Activated CD4-positive, alpha-beta memory T cell treated with anti-CD3 and anti-CD28 coated beads for 36 hours (primary cell): ENCODE measurements at regions of chr10 and their contacts with region 1.

Region 1: DNA sequence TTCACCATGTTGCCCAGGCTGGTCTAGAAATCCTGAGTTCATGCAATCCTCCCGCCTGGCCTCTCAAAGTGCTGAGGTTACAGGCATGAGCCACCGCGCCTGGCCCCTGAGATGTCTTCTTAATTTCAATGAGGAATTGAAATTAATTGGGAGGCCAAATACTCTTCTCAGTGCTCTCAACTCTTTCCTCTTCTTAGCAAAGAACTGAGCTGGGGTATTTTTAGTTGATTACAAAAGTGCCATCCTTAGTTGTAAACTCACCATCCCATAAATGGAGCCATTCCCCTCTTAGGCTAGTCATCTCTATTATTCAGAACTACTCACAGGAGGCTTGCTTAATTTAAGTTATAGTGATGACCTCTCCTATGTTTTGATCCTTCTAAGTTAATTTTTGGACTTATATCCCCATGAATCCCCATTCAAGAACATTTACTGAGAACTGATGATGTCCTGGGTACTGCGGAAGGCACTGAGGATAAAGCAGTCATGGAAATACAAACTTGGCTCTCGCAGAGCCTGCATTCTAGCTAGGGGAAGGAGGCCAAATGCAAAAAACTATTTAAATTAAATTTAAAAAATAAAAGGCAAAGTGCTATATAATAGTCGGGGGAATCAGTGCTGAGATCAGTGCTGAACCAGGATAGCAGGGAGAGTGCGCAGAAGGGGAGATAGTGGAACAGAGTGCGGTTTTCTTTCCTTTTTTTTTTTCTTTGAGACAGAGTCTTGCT is 145.3 kb downstream of the SFMBT2 start:
- DNase-seq: no peak
- H3K4me3 Mint-ChIP-seq: no peak overlapping the region
- H3K27ac Mint-ChIP-seq: no peak overlapping the region
- H3K4me1 Mint-ChIP-seq: peaks cover 42% of the 10 kb centered on the region
- H3K27me3 Mint-ChIP-seq: peaks cover 2% of the 10 kb centered on the region

Region 2: DNA sequence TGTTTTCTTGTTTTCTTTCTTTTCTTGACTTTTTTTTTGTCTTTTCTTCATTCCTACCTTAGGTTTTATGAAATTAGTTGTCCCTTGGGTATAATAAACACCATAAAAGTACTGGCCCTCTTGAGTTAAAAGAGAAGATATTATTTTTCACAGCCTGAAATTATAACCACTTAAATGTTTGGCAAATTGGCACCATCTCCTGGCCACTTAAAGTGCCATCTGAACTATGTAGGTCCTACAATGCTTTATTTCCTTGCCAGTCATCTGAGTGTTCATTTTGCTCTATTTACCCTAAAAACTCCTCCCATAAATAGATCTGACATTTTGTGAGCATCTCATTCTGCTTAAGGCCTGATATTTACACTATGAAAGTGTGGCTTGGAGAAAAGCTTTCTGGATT is 586.6 kb before region 1 on chr10:
- CTCF ChIA-PET with region 1: no interaction called
- POLR2A ChIA-PET with region 1: no interaction called
- intact Hi-C with region 1: no loop called
- DNase-seq: no peak
- H3K4me3 Mint-ChIP-seq: no peak overlapping the region
- H3K27ac Mint-ChIP-seq: no peak overlapping the region
- H3K4me1 Mint-ChIP-seq: peaks cover 4% of the 10 kb centered on the region
- H3K27me3 Mint-ChIP-seq: peaks cover 6% of the 10 kb centered on the region

Region 3: DNA sequence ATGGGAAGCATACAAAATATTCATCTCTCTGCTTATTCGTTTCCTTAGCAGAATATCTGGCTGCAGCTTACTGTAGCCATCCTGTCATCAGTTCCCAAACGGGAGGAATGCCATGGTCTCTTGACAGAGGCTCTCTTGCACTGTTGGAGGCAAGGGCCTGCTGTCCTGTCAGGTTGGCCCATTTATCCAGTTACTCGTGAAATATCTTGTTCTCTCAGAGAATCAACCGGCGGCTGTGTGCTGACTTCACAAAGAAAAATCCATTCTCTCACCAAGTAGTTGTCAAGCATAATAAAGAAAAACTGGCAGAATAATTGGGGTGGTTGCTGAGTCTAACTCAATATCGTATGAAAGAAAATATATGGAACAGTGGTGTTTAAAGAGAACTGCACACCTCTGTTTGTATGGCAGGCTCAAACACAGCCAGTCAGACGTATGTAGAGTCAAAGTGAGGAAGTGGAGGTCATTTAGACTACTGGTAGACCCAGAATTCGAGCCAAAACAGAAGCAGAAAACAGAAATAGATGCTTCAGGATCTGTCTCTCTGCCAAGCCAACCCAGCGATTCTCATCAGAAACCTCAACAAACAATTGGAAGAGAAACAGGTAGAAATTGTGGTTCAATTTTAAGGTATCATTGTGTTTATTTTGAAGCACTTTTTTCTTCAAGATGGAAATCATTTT is 336.3 kb before region 1 on chr10:
- CTCF ChIA-PET with region 1: no interaction called
- POLR2A ChIA-PET with region 1: no interaction called
- intact Hi-C with region 1: loop called (anchors 5 kb)
- DNase-seq: no peak
- H3K4me3 Mint-ChIP-seq: no peak overlapping the region
- H3K27ac Mint-ChIP-seq: no peak overlapping the region
- H3K4me1 Mint-ChIP-seq: peaks cover 43% of the 10 kb centered on the region
- H3K27me3 Mint-ChIP-seq: no peaks in the 10 kb centered on the region

Region 4: DNA sequence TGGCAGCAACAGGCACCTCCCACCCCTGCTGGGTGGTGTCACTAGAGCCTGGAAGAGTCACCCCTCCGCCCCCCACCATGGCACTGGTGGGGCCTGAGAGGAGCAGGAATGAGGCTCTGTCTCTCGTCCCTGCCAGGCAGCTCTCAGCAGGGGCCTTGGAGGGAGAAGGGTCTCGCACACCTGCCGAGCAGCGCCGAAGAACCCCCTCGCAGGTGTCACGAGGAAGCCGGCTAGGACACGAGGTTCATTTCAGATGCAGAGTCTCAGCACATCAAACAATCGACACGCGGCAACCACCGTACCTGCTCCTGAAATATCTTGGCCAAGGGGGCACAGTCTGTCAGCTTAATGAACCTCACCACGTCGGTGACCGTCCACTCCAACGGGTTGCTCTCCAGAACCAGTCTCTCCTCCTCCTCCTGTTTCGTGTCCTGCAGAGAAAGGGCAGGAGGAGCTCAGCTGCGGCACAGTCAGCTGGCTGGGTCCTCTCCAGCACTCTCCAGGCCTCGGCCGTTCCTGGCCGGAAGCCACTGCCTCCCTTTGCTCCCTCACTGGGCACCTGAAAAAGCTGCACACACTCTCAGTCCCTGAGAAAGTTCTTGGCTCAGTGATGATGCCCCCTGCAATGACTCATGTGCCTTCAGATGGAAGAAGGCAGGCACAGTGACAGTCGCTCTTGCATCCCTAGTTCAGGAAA is 94.8 kb before region 1 on chr10:
- CTCF ChIA-PET with region 1: no interaction called
- POLR2A ChIA-PET with region 1: no interaction called
- intact Hi-C with region 1: no loop called
- DNase-seq: no peak
- H3K4me3 Mint-ChIP-seq: no peak overlapping the region
- H3K27ac Mint-ChIP-seq: no peak overlapping the region
- H3K4me1 Mint-ChIP-seq: no peaks in the 10 kb centered on the region
- H3K27me3 Mint-ChIP-seq: no peaks in the 10 kb centered on the region

Region 5: GRCh38 chr10:7205656-7206055 is 59.9 kb before region 1 on chr10:
- CTCF ChIA-PET with region 1: no interaction called
- POLR2A ChIA-PET with region 1: no interaction called
- intact Hi-C with region 1: no loop called
- DNase-seq: no peak
- H3K4me3 Mint-ChIP-seq: no peak overlapping the region
- H3K27ac Mint-ChIP-seq: no peak overlapping the region
- H3K4me1 Mint-ChIP-seq: peaks cover 5% of the 10 kb centered on the region
- H3K27me3 Mint-ChIP-seq: no peaks in the 10 kb centered on the region

Region 6: DNA sequence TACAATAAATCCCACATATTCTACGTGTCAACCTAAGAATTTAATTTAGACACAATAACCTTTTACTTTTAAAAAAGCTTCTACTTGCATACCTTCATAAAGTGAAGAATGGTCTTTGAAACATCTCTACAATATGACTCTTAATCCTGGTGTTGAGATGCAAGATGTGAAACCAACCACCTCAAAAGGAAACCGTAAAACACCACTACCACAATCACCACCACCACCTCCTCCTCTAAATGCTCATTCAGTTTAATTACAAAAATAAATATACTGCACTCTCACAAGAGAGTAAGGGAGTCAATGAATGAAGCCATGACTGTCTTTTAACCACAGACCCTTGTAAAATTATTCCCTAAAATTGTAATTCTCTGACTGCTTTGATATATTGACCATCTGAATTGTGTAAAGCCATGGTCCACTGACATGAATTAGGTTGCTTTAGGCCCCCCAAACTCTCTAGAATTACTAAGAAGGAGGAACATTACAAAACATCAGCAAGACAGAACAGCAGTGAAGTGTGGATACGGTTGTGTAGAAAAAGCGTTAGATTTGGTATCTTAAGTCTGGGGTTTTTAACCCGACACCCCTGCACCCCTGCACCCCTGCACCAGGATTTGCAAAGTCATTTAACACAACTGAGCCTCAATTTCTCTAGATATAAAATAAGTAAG is 26.1 kb before region 1 on chr10:
- CTCF ChIA-PET with region 1: no interaction called
- POLR2A ChIA-PET with region 1: no interaction called
- intact Hi-C with region 1: loop called (anchors 1 kb)
- DNase-seq: peak; percentile 62
- H3K4me3 Mint-ChIP-seq: no peak overlapping the region
- H3K27ac Mint-ChIP-seq: no peak overlapping the region
- H3K4me1 Mint-ChIP-seq: peaks cover 34% of the 10 kb centered on the region
- H3K27me3 Mint-ChIP-seq: no peaks in the 10 kb centered on the region

Region 7: DNA sequence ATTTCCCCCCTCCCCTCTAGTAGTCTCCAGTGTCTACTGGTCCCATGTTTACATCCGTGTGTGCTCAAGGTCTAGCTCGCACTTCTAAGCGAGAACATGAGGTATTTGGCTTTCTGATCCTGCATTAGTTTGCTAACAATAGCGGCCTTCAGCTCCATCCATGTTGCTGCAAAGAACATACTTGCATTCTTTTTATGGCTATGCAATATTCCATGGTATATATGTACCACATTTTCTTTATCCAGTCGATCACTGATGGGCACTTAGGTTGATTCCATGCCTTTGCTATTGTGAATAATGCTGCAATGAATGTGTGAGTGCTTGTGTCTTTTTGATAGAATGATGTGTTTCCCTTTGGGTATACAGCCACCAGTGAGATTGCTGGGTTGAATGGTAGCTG is 15.3 kb before region 1 on chr10:
- CTCF ChIA-PET with region 1: no interaction called
- POLR2A ChIA-PET with region 1: no interaction called
- intact Hi-C with region 1: no loop called
- DNase-seq: no peak
- H3K4me3 Mint-ChIP-seq: no peak overlapping the region
- H3K27ac Mint-ChIP-seq: no peak overlapping the region
- H3K4me1 Mint-ChIP-seq: peaks cover under 1% of the 10 kb centered on the region
- H3K27me3 Mint-ChIP-seq: no peaks in the 10 kb centered on the region

Region 8: GRCh38 chr10:7314170-7314569 is 48.6 kb after region 1 on chr10:
- CTCF ChIA-PET with region 1: no interaction called
- POLR2A ChIA-PET with region 1: interaction called, 4 read pairs
- intact Hi-C with region 1: loop called (anchors 1 kb)
- DNase-seq: peak; percentile 52
- H3K4me3 Mint-ChIP-seq: peak overlapping the region; percentile 8
- H3K27ac Mint-ChIP-seq: peak overlapping the region; percentile 47
- H3K4me1 Mint-ChIP-seq: peaks cover 53% of the 10 kb centered on the region
- H3K27me3 Mint-ChIP-seq: no peaks in the 10 kb centered on the region